ENCODE measurements at regions of chr3 and their contacts with region 1.

Region 1: DNA sequence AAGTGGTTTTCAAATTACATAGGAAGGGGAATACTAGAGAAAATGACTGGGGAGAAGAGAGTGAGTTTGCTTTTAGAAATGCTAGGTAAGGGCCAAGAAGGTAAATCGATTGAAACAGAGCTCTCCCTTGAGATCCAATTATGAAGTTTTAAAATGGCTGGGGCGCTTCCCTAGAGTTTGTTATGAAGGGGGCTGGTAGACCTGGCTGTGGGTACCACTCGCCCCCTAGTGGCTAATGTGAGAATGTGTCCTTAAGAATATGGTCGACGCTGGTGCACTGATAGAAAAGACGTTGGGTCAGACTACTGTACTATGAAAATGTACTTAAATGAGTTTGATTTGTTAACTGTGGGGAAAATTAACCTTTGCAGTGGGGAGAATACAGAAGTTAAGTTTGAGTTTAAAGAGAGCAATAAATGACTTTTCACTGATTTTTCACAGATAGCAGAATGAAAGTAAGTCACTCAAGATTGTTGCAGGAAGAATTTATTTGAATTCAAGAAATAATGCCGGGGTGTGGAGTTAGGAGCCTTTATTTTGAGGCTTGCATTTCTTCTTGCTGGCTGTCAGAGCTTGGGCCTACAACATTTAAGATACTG is 9.2 kb downstream of the TMPRSS7 start:
- DNase-seq: no peak
- H3K4me3 ChIP-seq: no peak overlapping the region
- CTCF ChIP-seq: peak in 1 of 3 donors; percentile 43
- POLR2A ChIP-seq: no peak

Region 2: GRCh38 chr3:112327371-112327951 is 283.8 kb after region 1 on chr3:
- intact Hi-C with region 1: loop called (anchors 5 kb)
- DNase-seq: no peak
- H3K4me3 ChIP-seq: no peak overlapping the region
- CTCF ChIP-seq: no peak
- POLR2A ChIP-seq: no peak

Measured in lower leg skin (tissue), 4 donors.